Ascending aorta (tissue), 2 donors: ENCODE measurements at regions of chr4 and their contacts with region 1.

Region 1: DNA sequence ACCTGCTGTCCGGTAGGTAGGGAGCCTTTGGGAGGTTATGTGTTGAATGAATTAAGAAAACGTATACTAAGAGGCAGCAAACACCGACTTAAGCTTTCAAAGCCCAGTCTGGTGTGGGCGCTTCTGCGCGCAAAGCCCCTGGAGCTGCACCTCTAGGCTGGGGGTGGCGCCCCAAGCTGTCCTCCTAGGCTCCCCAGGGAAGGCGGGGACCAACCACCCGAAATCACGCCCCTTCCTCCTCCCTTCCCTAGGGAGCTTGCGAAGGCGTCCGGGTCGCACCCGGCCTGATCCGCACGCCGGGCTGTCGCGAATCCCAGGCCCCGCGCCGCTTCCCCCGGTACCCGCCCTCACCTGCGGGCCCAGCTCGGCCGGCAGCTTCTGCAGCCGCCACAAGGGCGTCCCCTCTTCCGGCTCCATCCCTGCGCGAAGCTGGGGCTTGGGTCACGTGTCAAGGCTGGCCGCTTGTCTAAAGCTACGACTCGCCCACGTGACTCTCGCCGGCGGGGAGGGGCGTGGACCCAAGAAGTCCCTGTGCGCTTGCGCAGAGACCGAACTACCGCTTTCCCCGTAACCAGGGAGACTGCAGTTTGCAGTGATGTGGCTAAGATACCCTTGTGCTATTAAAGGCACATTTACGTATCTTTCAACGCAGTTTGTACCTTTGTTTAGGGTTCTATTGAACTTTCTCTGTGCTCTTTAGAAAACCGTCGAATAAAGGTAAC is at the start of gene COMMD8:
- DNase-seq: peak; percentile 89 to 99
- H3K4me3 ChIP-seq: peak within 1 kb of the TSS; percentile 71 to 89
- H3K27ac ChIP-seq: peak within 1 kb of the TSS; percentile 78 to 88
- H3K4me1 ChIP-seq: peaks cover 0 to 8% of the 10 kb centered on the region in 2 donors
- H3K27me3 ChIP-seq: no peaks in the 10 kb centered on the region
- CTCF ChIP-seq: peak; percentile 44 to 56 (median 52)
- total RNA-seq, gene COMMD8: 1.7 TPM

Region 2: DNA sequence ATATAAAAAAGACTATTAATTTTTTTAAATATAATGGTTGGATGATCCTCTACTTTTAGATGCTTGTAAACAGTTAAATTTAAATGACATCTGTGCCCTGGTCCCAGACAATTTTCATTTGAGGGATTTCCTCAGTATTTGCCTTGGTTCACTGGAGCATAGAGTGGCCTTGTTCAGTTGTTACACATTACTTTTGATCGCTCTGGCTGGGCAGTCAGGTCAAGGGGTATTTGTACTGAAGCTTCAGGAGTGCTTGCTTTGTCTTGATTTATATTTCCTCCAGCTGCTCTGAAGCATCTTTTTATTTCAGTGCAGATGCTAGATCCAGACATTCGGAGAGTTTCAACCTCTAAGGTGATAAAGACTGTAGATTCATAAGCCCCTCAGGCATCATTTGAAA is 49.9 kb before region 1 on chr4:
- intact Hi-C with region 1: no loop called
- DNase-seq: no peak
- H3K4me3 ChIP-seq: no peak overlapping the region
- H3K27ac ChIP-seq: no peak overlapping the region
- H3K4me1 ChIP-seq: no peaks in the 10 kb centered on the region
- H3K27me3 ChIP-seq: no peaks in the 10 kb centered on the region
- CTCF ChIP-seq: no peak

Region 3: GRCh38 chr4:47432749-47433148 is 30.6 kb before region 1 on chr4:
- intact Hi-C with region 1: no loop called
- DNase-seq: no peak
- H3K4me3 ChIP-seq: no peak overlapping the region
- H3K27ac ChIP-seq: no peak overlapping the region
- H3K4me1 ChIP-seq: no peaks in the 10 kb centered on the region
- H3K27me3 ChIP-seq: no peaks in the 10 kb centered on the region
- CTCF ChIP-seq: no peak

Region 4: DNA sequence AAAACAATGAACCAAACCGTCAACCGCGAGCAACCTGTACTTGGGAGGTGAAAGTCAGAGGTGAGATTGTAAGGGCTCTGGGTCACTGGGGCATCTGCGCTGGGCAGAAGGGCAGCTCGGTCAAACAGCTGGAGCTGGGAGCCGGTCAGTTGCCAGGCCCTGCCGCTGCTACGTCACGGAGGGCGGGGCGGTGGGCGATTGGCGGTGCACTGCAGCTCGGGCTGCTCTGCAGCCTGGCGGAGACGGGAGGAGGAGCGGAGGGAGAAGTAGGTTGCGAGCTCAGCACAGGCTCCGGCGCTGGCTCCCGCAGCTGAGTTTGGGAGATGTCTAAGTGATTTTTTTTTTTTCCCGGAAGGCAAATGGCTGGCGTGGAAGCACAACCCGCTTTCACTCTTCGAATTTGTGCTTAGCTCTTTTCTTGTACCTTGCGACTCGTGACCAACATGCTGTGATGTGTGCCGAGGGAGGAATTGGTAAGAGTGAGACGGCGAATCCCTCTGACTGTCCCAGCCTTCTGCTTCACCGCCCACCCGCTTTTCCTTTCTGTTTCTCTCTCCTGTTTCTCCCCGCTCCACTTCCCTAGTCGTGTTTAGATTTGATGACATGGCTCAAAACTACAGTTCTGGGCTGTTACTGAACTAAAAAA is 21.8 kb after region 1 on chr4 and contains the start of gene ATP10D:
- intact Hi-C with region 1: loop called (anchors 1 kb)
- DNase-seq: peak; percentile 86 to 97
- H3K4me3 ChIP-seq: peak within 1 kb of the TSS; percentile 67 to 71
- H3K27ac ChIP-seq: peak within 1 kb of the TSS; percentile 89 to 90
- H3K4me1 ChIP-seq: peaks cover 0 to 13% of the 10 kb centered on the region in 2 donors
- H3K27me3 ChIP-seq: no peaks in the 10 kb centered on the region
- CTCF ChIP-seq: peak in 1 of 3 experiments; percentile 12
- total RNA-seq, gene ATP10D: 22.1 TPM

Region 5: GRCh38 chr4:47531954-47532321 is 68.5 kb after region 1 on chr4:
- intact Hi-C with region 1: loop called (anchors 2 kb)
- DNase-seq: no peak
- H3K4me3 ChIP-seq: no peak overlapping the region
- H3K27ac ChIP-seq: peak overlapping the region; percentile 70 to 74
- H3K4me1 ChIP-seq: peaks cover 8 to 24% of the 10 kb centered on the region in 2 donors
- H3K27me3 ChIP-seq: no peaks in the 10 kb centered on the region
- CTCF ChIP-seq: no peak

Region 6: DNA sequence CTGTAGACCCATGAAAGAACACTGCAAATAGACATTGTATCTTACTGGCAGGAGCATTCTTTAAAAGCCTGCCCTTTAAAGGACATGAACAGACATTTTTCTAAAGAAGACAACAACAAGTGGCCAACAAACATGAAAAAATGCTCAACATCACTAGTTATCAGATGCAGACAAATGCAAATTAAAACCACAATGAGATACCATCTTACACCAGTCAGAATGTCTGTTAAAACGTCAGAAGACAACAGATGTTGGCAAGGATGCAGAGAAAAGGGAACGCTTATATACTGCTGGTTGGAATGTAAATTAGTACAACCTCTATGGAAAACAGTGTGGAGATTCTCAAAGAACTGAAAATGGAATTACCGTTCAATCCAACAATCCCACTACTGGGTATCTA is 98.9 kb after region 1 on chr4:
- intact Hi-C with region 1: loop called (anchors 1 kb)
- DNase-seq: no peak
- H3K4me3 ChIP-seq: no peak overlapping the region
- H3K27ac ChIP-seq: no peak overlapping the region
- H3K4me1 ChIP-seq: peaks cover 0 to 3% of the 10 kb centered on the region in 2 donors
- H3K27me3 ChIP-seq: no peaks in the 10 kb centered on the region
- CTCF ChIP-seq: no peak

Region 7: DNA sequence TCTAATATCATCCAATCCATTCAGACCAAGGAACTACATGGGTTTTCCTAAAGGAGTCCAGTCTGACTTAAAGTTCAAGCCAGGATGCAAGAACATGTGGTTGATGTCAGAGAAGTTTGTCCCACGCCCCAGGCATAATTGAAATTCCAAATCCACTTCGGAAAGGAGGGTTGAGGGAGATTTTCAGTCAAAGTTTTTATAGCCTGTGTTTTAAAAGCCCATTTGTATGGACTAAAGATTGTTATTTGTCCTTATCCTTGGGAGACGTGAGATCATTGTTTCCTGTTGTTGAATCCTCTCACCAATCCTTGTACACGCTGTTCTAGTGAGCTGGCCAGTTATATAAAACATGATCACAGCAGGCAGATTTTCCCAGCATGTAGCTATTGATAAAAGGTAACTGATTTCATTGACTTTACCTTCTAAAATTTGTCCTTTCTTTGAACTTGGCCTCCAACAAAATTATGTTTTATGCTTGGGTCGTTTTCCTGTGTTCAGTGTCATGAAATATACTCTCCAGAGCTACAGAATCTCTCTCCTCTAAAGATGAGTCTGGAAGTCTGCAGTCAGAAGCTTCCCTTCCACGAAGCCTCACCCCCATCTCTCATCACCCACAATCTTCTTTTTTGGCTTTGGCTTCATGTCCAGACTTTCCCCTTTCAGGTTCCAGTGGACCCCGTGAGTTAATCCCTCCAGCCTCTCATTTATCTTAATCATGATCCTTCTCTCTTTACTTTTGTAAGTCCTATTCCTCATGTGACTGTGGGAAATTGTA is 114.6 kb after region 1 on chr4:
- intact Hi-C with region 1: loop called (anchors 5 kb)
- DNase-seq: peak in 1 of 2 donors; percentile 70
- H3K4me3 ChIP-seq: no peak overlapping the region
- H3K27ac ChIP-seq: peak overlapping the region; percentile 83 to 89
- H3K4me1 ChIP-seq: peaks cover 7 to 21% of the 10 kb centered on the region in 2 donors
- H3K27me3 ChIP-seq: no peaks in the 10 kb centered on the region
- CTCF ChIP-seq: no peak

Region 8: GRCh38 chr4:47914220-47914925 is 451.0 kb after region 1 on chr4 and contains the start of gene NFXL1:
- intact Hi-C with region 1: loop called (anchors 1 kb)
- DNase-seq: peak; percentile 95 to 99
- H3K4me3 ChIP-seq: peak within 1 kb of the TSS; percentile 82 to 87
- H3K27ac ChIP-seq: peak within 1 kb of the TSS; percentile 61 to 70
- H3K4me1 ChIP-seq: no peaks in the 10 kb centered on the region
- H3K27me3 ChIP-seq: no peaks in the 10 kb centered on the region
- CTCF ChIP-seq: no peak
- total RNA-seq, gene NFXL1: 5.2 TPM

Region 9: GRCh38 chr4:48340965-48341775 is 877.8 kb after region 1 on chr4 and contains the start of gene SLAIN2:
- intact Hi-C with region 1: loop called (anchors 10 kb)
- DNase-seq: peak; percentile 96 to 100
- H3K4me3 ChIP-seq: peak within 1 kb of the TSS; percentile 86 to 93
- H3K27ac ChIP-seq: peak within 1 kb of the TSS; percentile 98 to 99
- H3K4me1 ChIP-seq: peaks cover 11 to 14% of the 10 kb centered on the region in 2 donors
- H3K27me3 ChIP-seq: no peaks in the 10 kb centered on the region
- CTCF ChIP-seq: peak; percentile 26 to 51 (median 35)
- total RNA-seq, gene SLAIN2: 26.3 TPM

Region 10: GRCh38 chr4:48518143-48518542 is 1054.7 kb after region 1 on chr4:
- intact Hi-C with region 1: no loop called
- DNase-seq: no peak
- H3K4me3 ChIP-seq: no peak overlapping the region
- H3K27ac ChIP-seq: no peak overlapping the region
- H3K4me1 ChIP-seq: no peaks in the 10 kb centered on the region
- H3K27me3 ChIP-seq: no peaks in the 10 kb centered on the region
- CTCF ChIP-seq: no peak